Prostate gland (tissue), 2 donors: ENCODE measurements at regions of chr18 and their contacts with region 1.

Region 1: DNA sequence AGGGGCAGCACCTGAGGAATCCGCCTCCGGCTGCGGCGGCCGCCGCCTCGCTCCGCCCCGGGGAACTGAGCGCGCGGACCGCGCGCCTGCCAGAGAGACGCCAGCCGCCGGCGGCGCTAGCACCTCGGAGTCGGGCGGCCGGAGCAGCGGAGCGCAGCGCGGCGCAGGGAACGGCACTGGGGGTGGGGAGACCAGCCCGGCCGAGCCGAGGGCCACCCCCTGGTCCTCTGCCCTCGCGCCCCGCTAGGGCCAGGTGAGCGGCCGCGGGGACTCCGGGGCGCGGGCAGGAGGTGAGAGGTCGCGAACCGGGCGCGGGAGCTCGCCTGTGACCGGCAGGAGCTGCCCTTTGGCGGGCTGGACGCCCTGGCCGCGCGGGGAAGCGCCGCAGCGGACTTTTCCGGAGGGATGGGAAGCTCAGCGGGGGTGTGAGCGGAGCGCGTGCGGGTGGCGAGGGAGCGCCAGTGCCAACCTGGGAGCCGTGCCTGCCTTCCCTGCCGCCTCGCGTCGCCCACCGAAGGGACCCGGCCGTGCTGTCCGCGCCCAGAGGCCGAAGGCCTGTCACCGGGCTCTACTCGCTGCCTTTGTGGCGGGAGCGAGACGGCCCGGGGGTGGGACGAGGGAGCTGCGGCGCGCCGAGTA is at the start of gene GREB1L:
- DNase-seq: no peak
- H3K4me3 ChIP-seq: peak within 1 kb of the TSS; percentile 51 to 58
- H3K27ac ChIP-seq: peak within 1 kb of the TSS; percentile 69 to 71
- H3K4me1 ChIP-seq: no peaks in the 10 kb centered on the region
- H3K27me3 ChIP-seq: no peaks in the 10 kb centered on the region
- CTCF ChIP-seq: no peak
- POLR2A ChIP-seq: no peak
- total RNA-seq, gene GREB1L: 2.0 to 21.6 TPM

Region 2: GRCh38 chr18:21303913-21304312 is 61.7 kb after region 1 on chr18:
- intact Hi-C with region 1: no loop called
- DNase-seq: no peak
- H3K4me3 ChIP-seq: no peak overlapping the region
- H3K27ac ChIP-seq: no peak overlapping the region
- H3K4me1 ChIP-seq: no peaks in the 10 kb centered on the region
- H3K27me3 ChIP-seq: no peaks in the 10 kb centered on the region
- CTCF ChIP-seq: no peak
- POLR2A ChIP-seq: no peak

Region 3: DNA sequence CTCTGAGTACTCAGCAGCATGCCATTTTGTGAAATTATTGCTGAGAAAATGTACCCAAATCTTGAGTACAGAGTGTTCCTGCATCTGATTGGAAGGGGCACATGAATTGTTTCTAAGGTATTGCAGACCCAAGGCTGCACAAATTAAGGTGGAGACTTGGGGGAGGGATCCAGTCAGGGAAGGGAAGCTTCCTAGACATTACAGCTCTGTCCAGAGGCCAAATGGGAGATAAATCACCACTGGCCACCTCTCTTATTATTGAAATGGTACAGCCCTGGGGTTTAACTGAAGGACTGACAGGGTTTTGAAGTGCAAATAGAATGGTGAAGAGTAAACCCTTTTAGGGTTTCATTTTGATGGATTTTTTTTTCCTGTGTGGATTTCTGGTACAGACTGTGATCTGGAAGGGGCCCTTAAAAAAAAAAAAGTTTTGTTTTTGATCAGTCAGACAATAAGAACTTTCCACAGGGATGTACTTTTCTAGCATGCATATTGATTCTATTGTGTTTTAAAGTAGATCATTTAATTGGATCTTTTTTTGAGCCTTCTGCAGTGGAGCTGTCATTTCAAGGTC is 119.1 kb after region 1 on chr18:
- intact Hi-C with region 1: loop called (anchors 10 kb)
- DNase-seq: no peak
- H3K4me3 ChIP-seq: no peak overlapping the region
- H3K27ac ChIP-seq: no peak overlapping the region
- H3K4me1 ChIP-seq: no peaks in the 10 kb centered on the region
- H3K27me3 ChIP-seq: no peaks in the 10 kb centered on the region
- CTCF ChIP-seq: no peak
- POLR2A ChIP-seq: no peak

Region 4: DNA sequence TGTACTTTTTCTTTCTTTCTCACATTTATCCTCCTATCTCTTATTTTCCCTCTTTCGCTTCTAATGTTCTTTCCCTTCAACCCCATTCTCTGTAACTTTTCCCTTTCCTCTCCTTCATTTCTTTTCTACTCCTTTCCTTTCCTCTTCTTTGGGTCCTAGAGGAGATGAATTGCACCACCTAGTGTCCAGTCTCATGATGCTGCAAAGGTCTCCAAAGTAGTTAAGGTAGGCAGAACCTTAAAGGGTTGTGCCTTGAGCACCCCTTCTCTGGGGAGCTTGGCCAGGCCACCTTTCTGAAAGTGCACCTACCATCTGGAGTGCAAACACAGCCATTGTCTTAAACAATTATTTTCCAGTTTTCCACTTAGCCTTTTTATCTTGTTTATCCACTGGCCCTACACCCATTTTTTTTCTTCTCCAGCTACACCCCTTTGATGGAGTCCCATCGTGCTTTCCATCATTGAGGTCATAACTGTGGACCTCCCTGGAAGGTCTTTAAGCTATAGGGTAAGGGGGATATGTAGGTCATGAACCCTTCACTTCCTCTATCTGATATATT is 202.3 kb after region 1 on chr18:
- intact Hi-C with region 1: loop called (anchors 10 kb)
- DNase-seq: peak; percentile 11
- H3K4me3 ChIP-seq: no peak overlapping the region
- H3K27ac ChIP-seq: no peak overlapping the region
- H3K4me1 ChIP-seq: no peaks in the 10 kb centered on the region
- H3K27me3 ChIP-seq: no peaks in the 10 kb centered on the region
- CTCF ChIP-seq: peak in 2 of 4 experiments; percentile 43 to 56
- POLR2A ChIP-seq: no peak